Aorta (tissue), 5 donors: ENCODE measurements at regions of chr1 and their contacts with region 1.

Region 1: DNA sequence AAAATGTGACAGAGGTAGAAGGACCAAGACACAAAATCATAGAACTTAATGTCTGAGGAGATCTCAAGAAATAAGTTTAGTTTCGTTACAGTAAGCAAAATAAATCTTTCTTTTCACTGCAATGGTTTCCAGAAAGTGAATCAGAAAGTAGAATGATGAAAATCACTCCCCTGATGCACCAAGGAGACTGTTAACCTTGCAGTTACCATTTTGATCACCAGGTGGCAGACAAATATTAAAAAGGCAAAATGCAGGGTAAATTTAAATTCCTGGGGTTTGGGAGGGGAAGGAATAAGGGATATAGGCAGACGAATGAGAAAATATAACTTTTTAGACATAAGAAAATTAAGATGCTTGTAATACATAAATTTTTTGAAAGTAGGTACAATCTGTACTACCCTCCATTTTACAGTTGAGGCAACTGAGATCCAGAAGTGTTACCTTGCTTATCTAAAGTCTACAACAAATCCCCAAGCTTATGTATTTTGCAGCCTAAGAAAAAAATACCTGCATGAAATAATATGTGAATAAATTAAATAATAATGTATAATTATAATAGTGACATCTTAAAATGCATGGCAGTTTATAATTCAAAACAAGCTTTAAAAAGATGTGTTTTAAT is 253.2 kb downstream of the CRB1 start:
- DNase-seq: no peak
- ATAC-seq: no peak
- H3K4me3 ChIP-seq: no peak overlapping the region
- H3K27ac ChIP-seq: no peak overlapping the region
- H3K4me1 ChIP-seq: no peaks in the 10 kb centered on the region
- H3K27me3 ChIP-seq: no peaks in the 10 kb centered on the region

Region 2: GRCh38 chr1:197399755-197400527 is 121.3 kb before region 1 on chr1:
- intact Hi-C with region 1: loop called in 1 of 2 experiments (anchors 10 kb)
- DNase-seq: no peak
- ATAC-seq: no peak
- H3K4me3 ChIP-seq: no peak overlapping the region
- H3K27ac ChIP-seq: no peak overlapping the region
- H3K4me1 ChIP-seq: no peaks in the 10 kb centered on the region
- H3K27me3 ChIP-seq: no peaks in the 10 kb centered on the region

Region 3: DNA sequence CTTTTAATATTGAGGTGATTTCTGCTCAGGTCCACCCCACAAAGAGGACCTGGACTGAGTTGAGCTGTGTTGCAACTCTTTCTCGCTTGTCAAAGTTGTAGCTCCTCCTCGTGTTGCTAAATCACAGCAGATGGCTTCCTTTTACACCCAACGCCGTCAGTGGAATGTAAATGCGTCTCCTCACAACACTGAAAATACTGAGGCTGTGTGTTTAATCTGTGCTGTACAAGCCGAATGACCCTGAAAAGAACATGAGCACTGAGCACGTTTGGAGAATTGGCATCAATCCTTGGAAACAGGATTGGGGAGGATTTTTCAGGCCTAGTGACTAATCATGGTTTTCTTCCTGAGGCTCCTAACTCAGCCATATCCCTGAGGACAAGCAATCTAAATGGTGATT is 57.2 kb before region 1 on chr1:
- intact Hi-C with region 1: no loop called
- DNase-seq: no peak
- ATAC-seq: peak; percentile 79
- H3K4me3 ChIP-seq: no peak overlapping the region
- H3K27ac ChIP-seq: no peak overlapping the region
- H3K4me1 ChIP-seq: peaks cover 0 to 4% of the 10 kb centered on the region in 2 donors
- H3K27me3 ChIP-seq: no peaks in the 10 kb centered on the region

Region 4: GRCh38 chr1:197902454-197903195 is 381.4 kb after region 1 on chr1 and contains the start of gene C1orf53:
- intact Hi-C with region 1: loop called (anchors 10 kb)
- DNase-seq: peak; percentile 88 to 94
- ATAC-seq: peak; percentile 99
- H3K4me3 ChIP-seq: peak within 1 kb of the TSS; percentile 61 to 84
- H3K27ac ChIP-seq: peak within 1 kb of the TSS in 1 of 2 donors; percentile 2
- H3K4me1 ChIP-seq: no peaks in the 10 kb centered on the region
- H3K27me3 ChIP-seq: peaks cover 0 to 1% of the 10 kb centered on the region in 2 donors
- total RNA-seq, gene C1orf53: 0.81 TPM in 1 of 2 donors, not detected in the other